SK-N-SH (cell line): ENCODE measurements at regions of chr17 and their contacts with region 1.

Region 1: DNA sequence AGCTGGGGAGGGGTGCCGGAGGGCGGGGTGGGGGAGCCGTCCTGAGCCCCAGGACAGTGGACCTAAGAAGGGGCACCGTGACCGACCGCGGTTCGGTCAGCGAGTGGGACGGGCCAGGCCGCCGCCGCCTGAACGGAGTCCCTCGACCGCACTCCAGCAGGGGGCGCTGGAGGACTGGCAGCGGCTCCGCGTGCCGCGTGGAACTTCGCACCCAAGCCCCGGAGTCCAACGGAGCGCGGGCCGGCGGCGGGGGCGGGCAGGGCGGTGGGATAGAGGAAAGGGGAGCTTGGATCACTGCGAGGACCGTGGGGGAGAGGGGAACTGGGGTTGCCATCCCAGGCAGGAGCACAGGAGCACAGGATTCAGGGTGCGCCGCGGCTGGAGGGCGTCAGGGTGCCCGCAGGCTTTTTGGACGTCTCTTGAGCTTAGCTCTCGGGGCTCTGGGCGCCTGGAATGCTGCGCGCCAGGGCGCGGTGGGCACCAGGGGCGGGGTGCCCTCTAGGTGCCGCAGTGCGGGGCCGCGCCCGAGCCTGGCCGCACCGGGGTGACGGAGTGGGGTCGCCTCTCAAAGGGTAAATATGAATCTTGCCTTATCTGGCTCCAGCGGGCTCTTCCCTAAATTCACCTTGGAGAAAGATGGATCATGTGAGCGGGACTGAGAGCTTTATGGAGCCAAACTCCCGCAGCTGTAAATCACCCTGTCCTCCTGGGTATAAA is 382 bp upstream of the OTOP2 start:
- DNase-seq: peak; percentile 98
- H3K4me3 ChIP-seq: peak overlapping the region; percentile 42 to 62
- H3K27ac ChIP-seq: no peak overlapping the region
- H3K4me1 ChIP-seq: peaks cover 0 to 19% of the 10 kb centered on the region in 2 experiments; a peak in 1 of 4 replicates
- H3K27me3 ChIP-seq: peaks cover 71% of the 10 kb centered on the region
- CTCF ChIP-seq: peak; percentile 86
- EP300 ChIP-seq: no peak
- RAD21 ChIP-seq: peak; percentile 77

Region 2: GRCh38 chr17:74833501-74834377 is 90.0 kb before region 1 on chr17:
- CTCF ChIA-PET with region 1: no interaction called
- POLR2A ChIA-PET with region 1: no interaction called
- DNase-seq: peak; percentile 74
- H3K4me3 ChIP-seq: no peak overlapping the region
- H3K27ac ChIP-seq: no peak overlapping the region
- H3K4me1 ChIP-seq: peaks cover 12 to 15% of the 10 kb centered on the region in 2 experiments; a peak in 3 of 4 replicates
- H3K27me3 ChIP-seq: no peaks in the 10 kb centered on the region
- CTCF ChIP-seq: no peak
- EP300 ChIP-seq: no peak
- RAD21 ChIP-seq: no peak

Region 3: DNA sequence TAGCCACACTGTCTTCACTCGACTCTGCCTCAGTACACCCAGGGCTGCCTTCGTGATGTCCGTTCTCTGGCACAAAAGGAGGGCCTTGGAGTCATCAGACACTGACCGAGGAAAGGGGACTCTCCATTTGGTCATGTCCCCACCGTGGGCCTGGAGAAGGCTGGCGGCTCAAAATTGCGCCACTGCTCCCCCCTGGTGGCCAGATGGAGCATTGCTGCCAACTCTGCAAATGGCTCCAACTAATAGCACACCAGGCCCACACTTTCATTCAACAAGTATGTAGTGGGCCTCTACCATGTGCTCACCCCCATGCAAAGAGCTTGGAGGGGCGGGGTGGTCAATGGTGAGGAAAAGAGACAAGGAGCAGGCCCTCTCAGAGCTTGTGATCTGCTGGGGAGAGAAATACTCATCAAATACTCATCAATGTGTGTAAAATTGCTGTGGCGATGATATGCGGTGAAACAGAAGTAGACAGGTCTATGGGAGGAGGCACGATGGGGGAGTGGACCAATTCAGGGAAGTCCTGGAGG is 58.8 kb before region 1 on chr17:
- CTCF ChIA-PET with region 1: interaction called, 16 read pairs
- POLR2A ChIA-PET with region 1: no interaction called
- DNase-seq: peak; percentile 93
- H3K4me3 ChIP-seq: no peak overlapping the region; a peak in 1 of 4 replicates
- H3K27ac ChIP-seq: no peak overlapping the region
- H3K4me1 ChIP-seq: peaks cover 0 to 10% of the 10 kb centered on the region in 2 experiments; a peak in 2 of 4 replicates
- H3K27me3 ChIP-seq: peaks cover 18% of the 10 kb centered on the region
- CTCF ChIP-seq: peak; percentile 99
- EP300 ChIP-seq: no peak
- RAD21 ChIP-seq: peak; percentile 99

Region 4: GRCh38 chr17:74892974-74893911 is 30.4 kb before region 1 on chr17 and contains the start of gene FADS6:
- CTCF ChIA-PET with region 1: interaction called, 18 read pairs
- POLR2A ChIA-PET with region 1: no interaction called
- DNase-seq: peak; percentile 81
- H3K4me3 ChIP-seq: peak within 1 kb of the TSS; percentile 18 to 43; a peak in 3 of 4 replicates
- H3K27ac ChIP-seq: no peak within 1 kb of the TSS
- H3K4me1 ChIP-seq: peaks cover 0 to 6% of the 10 kb centered on the region in 2 experiments; a peak in 1 of 4 replicates
- H3K27me3 ChIP-seq: peaks cover 77% of the 10 kb centered on the region
- CTCF ChIP-seq: no peak
- EP300 ChIP-seq: no peak
- RAD21 ChIP-seq: no peak
- polyA plus RNA-seq, gene FADS6: not detected in 2 replicates

Region 5: DNA sequence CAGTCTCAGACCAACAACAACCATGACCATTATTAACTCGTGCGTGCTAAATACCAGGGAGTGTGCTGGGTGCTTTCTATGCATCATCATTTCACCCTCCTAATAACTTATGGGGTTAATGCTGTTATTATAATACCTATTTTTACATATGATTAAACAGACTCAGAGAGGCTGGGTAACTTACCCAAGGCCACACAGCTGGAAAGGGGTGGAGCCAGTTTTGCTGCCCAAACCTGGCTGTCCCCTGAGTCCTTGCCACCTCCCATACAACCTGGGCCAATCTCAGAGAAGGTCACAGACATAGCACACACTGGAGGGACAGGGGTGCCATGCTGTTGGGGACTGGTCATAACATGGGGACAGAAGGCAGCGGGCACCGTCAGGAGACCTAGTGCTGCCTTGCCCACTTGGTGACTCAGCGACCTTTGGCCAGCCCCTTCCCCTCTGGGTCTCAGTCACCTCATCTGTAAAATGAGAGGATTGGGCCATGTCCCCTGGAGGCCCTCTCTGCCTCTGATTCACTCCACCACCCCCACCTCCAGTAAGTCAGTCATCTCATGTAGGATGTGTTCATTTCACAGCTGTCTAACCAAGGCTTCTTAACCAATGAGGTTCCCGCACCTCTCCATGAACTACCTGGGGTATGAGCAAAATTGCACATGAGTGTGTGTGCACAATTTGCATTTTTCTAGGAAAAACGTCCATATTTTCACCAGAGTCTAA is 18.8 kb before region 1 on chr17:
- CTCF ChIA-PET with region 1: interaction called, 20 read pairs
- POLR2A ChIA-PET with region 1: no interaction called
- DNase-seq: no peak
- H3K4me3 ChIP-seq: no peak overlapping the region
- H3K27ac ChIP-seq: no peak overlapping the region
- H3K4me1 ChIP-seq: no peaks in the 10 kb centered on the region
- H3K27me3 ChIP-seq: peaks cover 26% of the 10 kb centered on the region
- CTCF ChIP-seq: no peak
- EP300 ChIP-seq: no peak
- RAD21 ChIP-seq: no peak

Region 6: DNA sequence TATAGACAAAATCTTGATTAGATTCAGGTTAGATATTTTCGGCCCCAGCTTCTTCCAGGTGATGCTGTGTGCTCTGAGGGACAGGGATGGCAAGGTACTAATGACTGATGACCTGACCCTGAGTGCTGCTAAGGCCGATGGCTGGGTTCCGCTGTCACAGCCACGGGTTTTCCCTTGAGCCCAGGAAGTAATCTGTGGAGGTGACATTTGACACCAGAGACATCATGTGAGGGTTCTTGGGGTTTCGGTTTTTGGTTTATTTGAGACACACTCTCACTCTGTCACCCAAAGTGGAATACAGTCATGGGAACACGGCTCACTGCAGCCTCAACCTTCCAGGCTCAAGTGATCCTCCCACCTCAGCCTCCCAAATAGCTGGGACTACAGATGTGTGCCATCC is 21.9 kb after region 1 on chr17:
- CTCF ChIA-PET with region 1: interaction called, 104 read pairs
- POLR2A ChIA-PET with region 1: no interaction called
- DNase-seq: no peak
- H3K4me3 ChIP-seq: no peak overlapping the region
- H3K27ac ChIP-seq: no peak overlapping the region
- H3K4me1 ChIP-seq: no peaks in the 10 kb centered on the region
- H3K27me3 ChIP-seq: peaks cover 80% of the 10 kb centered on the region
- CTCF ChIP-seq: no peak
- EP300 ChIP-seq: no peak
- RAD21 ChIP-seq: no peak

Region 7: GRCh38 chr17:75012346-75013091 is 88.8 kb after region 1 on chr17 and contains the start of gene MRPL58:
- CTCF ChIA-PET with region 1: interaction called, 31 read pairs
- POLR2A ChIA-PET with region 1: no interaction called
- DNase-seq: peak; percentile 96
- H3K4me3 ChIP-seq: peak within 1 kb of the TSS; percentile 65 to 77
- H3K27ac ChIP-seq: peak within 1 kb of the TSS; percentile 88 to 95
- H3K4me1 ChIP-seq: peaks cover 17 to 26% of the 10 kb centered on the region in 2 experiments; a peak in 3 of 4 replicates
- H3K27me3 ChIP-seq: no peaks in the 10 kb centered on the region
- CTCF ChIP-seq: peak; percentile 59
- EP300 ChIP-seq: peak; percentile 11 to 37; a peak in 2 of 4 replicates
- RAD21 ChIP-seq: peak; percentile 50
- polyA plus RNA-seq, gene MRPL58: 87.3 and 89.2 TPM in 2 replicates